AG04450 (cell line): ENCODE measurements at regions of chr18 and their contacts with region 1.

Region 1: DNA sequence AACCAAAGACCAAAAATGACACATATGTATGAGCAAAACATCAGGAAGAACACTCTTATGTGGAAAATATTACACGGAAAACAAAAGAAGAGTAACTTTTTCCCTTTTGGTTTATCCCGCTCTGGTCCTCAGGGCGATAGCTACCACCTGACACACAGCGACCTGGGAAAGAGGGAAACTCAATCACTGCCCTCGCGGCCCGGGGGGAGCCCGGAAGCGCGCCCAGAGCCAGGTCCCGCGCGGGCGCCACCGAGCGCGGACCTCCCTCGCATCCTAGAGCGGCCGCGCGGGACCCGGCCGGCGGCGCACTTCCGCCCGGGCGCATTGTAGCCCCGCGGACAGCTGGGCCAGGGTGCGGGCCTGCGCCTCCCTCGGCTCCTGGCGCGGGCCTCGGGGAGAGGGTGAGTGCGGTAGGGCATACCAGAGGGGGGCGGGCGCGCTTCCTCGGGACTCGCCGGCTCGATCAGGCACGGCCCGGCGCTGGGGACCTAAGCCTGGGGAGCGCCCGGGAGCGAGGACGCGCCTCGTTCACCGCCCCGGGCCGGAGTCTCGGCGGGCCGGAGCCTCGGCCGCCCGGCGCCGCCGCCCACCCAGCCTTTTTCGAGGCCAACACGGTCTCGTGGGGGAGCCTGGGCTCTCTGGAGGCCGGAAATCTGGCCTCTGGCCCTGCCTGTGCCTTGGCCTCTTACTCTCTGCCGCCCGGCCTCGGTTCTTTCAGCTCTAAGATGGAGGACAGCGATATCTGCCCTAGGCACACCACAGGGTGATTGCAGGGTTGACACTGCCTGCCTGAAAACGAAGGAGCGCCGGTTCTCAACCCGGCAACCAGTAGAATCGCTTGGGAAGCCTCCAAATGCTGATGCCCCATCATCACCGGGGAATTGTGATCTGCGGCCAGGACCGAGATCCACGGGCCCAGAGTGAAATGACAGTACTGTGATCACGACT is at the start of gene ELAC1:
- DNase-seq: peak; percentile 36
- H3K4me3 ChIP-seq: peak within 1 kb of the TSS; percentile 86
- H3K27ac ChIP-seq: peak within 1 kb of the TSS; percentile 95
- H3K27me3 ChIP-seq: no peaks in the 10 kb centered on the region
- CTCF ChIP-seq: no peak
- polyA plus RNA-seq, gene ELAC1: 5.9 and 9.1 TPM in 2 replicates

Region 2: DNA sequence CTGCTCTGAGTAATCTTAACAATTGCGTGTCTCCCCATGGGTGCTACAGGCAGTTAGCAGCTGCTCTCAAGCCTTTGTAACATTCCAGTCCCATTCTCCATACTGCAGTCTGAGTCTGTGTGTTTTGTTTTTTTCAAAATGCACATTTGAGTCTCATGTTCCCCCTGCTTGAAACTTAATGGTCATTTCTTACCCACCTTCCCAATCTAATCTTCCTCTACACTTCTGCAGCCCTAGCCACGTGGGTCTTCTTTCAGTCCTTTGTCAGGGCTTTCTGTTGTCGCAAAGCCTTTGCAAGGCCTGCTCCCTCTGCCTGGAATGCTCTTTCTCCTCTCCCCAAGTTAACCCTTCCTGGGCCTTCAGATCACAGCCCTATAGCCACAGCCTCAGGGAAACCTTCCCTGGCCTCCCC is 24.4 kb after region 1 on chr18:
- CTCF ChIA-PET with region 1: no interaction called
- POLR2A ChIA-PET with region 1: no interaction called
- DNase-seq: no peak
- H3K4me3 ChIP-seq: no peak overlapping the region
- H3K27ac ChIP-seq: no peak overlapping the region
- H3K27me3 ChIP-seq: no peaks in the 10 kb centered on the region
- CTCF ChIP-seq: no peak

Region 3: DNA sequence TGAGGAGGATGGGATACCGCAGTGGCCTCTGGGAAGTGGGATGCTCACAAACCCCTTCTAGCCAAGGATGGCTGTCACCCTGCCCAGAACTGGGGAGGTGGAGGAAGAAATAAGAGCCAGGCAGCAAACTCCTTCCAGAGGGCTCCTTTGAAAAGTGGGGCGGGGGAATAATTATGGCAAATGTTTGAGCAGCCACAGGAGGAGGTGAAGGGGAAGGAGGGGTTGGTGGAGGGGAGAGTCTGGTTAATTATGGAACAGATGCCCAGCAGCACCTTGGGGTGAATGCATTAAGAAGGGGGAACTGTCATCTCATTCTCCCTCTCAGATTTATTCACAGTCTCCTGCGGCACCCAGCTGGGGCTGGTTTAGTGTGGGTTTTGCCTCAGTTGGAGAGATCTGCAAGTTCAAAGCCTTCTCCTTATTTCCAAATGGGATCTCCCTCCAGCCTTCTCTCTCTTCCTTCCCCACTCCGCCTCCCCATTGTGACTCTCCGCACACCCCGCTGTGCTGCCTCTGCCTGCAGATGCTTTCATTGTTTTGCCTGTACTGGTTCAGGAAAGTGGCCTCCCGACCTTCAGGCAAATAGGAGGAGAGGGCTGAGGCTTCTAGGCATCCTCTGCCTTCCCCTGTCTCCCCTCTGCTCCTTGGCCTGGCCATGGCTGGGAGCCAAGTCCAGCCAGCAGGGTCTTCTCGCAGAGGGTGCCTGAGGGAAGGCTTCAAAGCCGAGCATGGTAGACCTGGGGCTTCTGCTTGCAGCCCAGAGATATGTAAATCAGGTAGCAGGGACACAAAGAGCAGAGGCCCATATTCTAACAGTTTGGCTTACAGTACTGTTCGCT is 686.7 kb after region 1 on chr18:
- CTCF ChIA-PET with region 1: no interaction called
- POLR2A ChIA-PET with region 1: interaction called, 10 read pairs
- DNase-seq: no peak
- H3K4me3 ChIP-seq: no peak overlapping the region
- H3K27ac ChIP-seq: no peak overlapping the region
- H3K27me3 ChIP-seq: no peaks in the 10 kb centered on the region
- CTCF ChIP-seq: no peak